Aorta (tissue), 5 donors: ENCODE measurements at regions of chr13 and their contacts with region 1.

Region 1: GRCh38 chr13:22929381-22930126 is 251.2 kb upstream of the SGCG start:
- DNase-seq: no peak
- ATAC-seq: no peak
- H3K4me3 ChIP-seq: no peak overlapping the region
- H3K27ac ChIP-seq: no peak overlapping the region
- H3K4me1 ChIP-seq: no peaks in the 10 kb centered on the region
- H3K27me3 ChIP-seq: no peaks in the 10 kb centered on the region

Region 2: DNA sequence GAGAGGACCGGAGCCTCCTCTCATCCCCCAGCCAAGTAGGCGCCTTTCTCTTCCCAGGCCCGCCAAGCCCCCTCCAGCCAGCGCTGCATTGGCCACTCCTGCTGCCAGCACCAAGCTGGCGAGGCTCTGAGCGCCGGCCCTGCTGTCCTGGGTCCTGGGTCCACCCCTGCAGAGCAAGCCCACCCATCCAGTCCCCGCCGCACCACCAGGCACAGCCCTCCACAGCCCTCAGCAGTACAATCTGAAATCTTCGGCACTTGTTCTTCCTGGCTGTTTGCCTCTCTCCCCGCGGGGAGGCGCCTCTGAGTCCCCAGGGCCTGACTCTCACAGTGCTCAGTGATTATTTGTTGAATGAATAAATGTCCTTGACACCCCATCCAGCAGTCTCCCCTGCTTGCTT is 14.8 kb after region 1 on chr13:
- intact Hi-C with region 1: no loop called
- DNase-seq: peak in 1 of 2 donors; percentile 77
- ATAC-seq: no peak
- H3K4me3 ChIP-seq: no peak overlapping the region
- H3K27ac ChIP-seq: no peak overlapping the region
- H3K4me1 ChIP-seq: no peaks in the 10 kb centered on the region
- H3K27me3 ChIP-seq: no peaks in the 10 kb centered on the region

Region 3: DNA sequence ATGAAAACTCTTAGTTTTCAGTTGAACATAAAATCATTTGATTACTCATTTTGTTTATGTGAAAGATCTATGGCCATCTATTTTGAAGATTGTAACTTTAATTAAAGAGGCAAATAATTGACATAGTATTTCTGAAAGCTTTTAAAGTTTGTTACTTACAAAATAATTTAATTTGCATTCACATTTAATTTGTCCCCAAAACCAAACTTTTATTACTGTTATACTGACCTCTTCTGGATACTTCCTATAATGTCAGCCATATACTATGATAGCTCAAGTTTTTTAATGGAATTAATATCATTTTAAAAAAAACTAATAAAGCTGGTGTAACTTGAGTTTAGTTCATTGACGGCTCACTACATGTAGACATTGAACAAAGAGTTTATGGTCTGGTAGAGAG is 246.4 kb after region 1 on chr13:
- intact Hi-C with region 1: no loop called
- DNase-seq: no peak
- ATAC-seq: no peak
- H3K4me3 ChIP-seq: no peak overlapping the region
- H3K27ac ChIP-seq: no peak overlapping the region
- H3K4me1 ChIP-seq: no peaks in the 10 kb centered on the region
- H3K27me3 ChIP-seq: no peaks in the 10 kb centered on the region

Region 4: DNA sequence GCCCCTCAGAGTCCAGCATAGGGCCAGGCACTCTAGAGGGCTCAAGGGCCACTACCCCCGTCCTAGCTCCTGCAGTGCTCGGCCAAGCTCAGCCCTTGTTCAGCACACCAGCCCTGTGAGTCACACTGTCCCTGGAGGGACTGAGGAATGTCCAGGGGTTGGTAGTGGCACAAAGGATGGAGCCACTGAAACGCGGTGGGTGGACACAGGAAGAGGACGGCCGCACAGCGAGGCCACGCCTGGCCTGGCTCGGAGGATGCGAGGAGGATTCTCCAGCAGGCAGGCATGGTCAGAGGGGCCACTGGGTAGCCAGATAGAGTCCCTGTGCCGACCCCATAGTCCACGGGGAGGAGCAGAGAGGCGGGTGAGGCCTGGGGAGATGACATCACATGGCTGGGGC is 1425.5 kb after region 1 on chr13:
- intact Hi-C with region 1: loop called in 1 of 2 experiments (anchors 10 kb)
- DNase-seq: no peak
- ATAC-seq: no peak
- H3K4me3 ChIP-seq: no peak overlapping the region
- H3K27ac ChIP-seq: no peak overlapping the region
- H3K4me1 ChIP-seq: no peaks in the 10 kb centered on the region
- H3K27me3 ChIP-seq: no peaks in the 10 kb centered on the region